ENCODE measurements at regions of chr10 and their contacts with region 1.

Region 1: DNA sequence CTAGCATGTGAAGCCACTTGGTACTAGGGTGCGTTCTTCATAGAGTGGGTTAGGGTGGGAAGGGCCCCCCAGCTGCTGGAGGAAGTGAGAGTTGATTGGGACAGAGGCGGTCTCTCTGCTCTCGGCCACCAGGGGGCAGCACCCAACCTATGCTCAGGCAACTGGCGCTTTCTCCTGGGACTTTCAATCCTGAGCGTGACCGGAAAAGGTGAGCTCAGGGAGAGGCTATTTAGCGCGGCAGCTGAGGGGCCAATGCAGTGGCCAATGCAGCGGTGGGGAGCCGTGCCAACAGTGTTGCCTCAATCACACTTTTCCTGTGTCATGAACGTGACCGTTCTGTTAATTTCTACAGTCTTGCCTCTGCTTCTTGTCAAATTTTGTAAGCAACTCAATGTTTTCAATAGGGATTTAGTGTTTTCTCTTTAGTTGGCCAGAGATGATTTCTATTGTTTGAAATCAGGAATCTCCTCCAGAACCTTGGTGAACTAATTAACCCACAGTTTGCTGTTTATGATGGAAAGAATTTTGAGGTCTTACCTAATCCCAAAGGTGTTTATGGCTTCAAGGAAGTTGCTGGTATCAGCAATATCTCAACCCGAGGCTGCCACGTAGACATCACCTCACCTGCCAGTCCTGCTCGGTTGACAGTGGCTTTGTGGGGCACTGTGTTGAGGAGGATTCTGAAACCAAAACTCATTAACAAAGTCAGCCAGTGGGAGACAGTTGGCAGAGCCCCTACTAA is 67.9 kb upstream of the PDZD8 start:
- DNase-seq: peak; percentile 46 to 93
- H3K4me3 ChIP-seq: no peak overlapping the region
- H3K27ac ChIP-seq: no peak overlapping the region
- H3K4me1 ChIP-seq: no peaks in the 10 kb centered on the region; a peak in 1 of 7 replicates
- H3K27me3 ChIP-seq: no peaks in the 10 kb centered on the region
- CTCF ChIP-seq: peak; percentile 85 to 92 (median 88)
- EP300 ChIP-seq: no peak
- POLR2A ChIP-seq: no peak
- RAD21 ChIP-seq: peak; percentile 69 to 81

Region 2: GRCh38 chr10:117391436-117392205 is 51.5 kb before region 1 on chr10:
- CTCF ChIA-PET with region 1: interaction called, 10 read pairs
- POLR2A ChIA-PET with region 1: no interaction called
- DNase-seq: no peak
- H3K4me3 ChIP-seq: no peak overlapping the region
- H3K27ac ChIP-seq: no peak overlapping the region; the same call in 1 of the 2 replicates
- H3K4me1 ChIP-seq: no peaks in the 10 kb centered on the region
- H3K27me3 ChIP-seq: no peaks in the 10 kb centered on the region
- CTCF ChIP-seq: no peak
- EP300 ChIP-seq: no peak
- POLR2A ChIP-seq: no peak
- RAD21 ChIP-seq: no peak

Region 3: DNA sequence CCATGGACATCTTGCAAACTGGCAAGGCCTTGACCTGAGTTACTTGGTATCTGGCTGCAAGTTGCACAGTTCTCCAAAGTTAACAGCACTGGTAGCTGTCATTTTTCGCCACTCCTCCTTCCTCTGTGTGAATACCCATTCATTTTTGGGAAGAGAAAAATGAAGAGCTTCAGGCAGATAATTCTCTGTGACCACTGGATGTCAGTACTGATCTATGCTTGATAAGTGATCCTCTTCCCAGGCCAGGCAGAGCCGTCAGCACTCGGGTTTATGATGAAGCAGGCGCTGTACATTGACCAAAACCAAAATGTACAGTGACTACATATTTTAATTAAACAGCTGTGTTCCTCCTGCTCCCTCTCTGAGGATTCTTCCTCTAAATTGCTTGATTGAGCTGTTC is 12.0 kb before region 1 on chr10:
- CTCF ChIA-PET with region 1: interaction called, 132 read pairs
- POLR2A ChIA-PET with region 1: no interaction called
- DNase-seq: no peak
- H3K4me3 ChIP-seq: no peak overlapping the region
- H3K27ac ChIP-seq: no peak overlapping the region
- H3K4me1 ChIP-seq: peaks cover 0 to 4% (median under 1%) of the 10 kb centered on the region in 4 experiments; a peak in 3 of 7 replicates
- H3K27me3 ChIP-seq: no peaks in the 10 kb centered on the region
- CTCF ChIP-seq: peak in 1 of 3 experiments; percentile 15; a peak in 1 of 4 replicates
- EP300 ChIP-seq: no peak
- POLR2A ChIP-seq: no peak
- RAD21 ChIP-seq: peak; percentile 26 to 43; a peak in 3 of 4 replicates

Region 4: GRCh38 chr10:117461766-117462423 is 18.8 kb after region 1 on chr10:
- CTCF ChIA-PET with region 1: interaction called, 18 read pairs
- POLR2A ChIA-PET with region 1: no interaction called
- DNase-seq: no peak
- H3K4me3 ChIP-seq: no peak overlapping the region
- H3K27ac ChIP-seq: no peak overlapping the region
- H3K4me1 ChIP-seq: peaks cover 0 to 13% (median 5%) of the 10 kb centered on the region in 4 experiments; a peak in 5 of 7 replicates
- H3K27me3 ChIP-seq: no peaks in the 10 kb centered on the region
- CTCF ChIP-seq: no peak
- EP300 ChIP-seq: no peak
- POLR2A ChIP-seq: no peak
- RAD21 ChIP-seq: no peak

Region 5: GRCh38 chr10:117471344-117471874 is 28.3 kb after region 1 on chr10:
- CTCF ChIA-PET with region 1: interaction called, 11 read pairs
- POLR2A ChIA-PET with region 1: no interaction called
- DNase-seq: no peak
- H3K4me3 ChIP-seq: no peak overlapping the region
- H3K27ac ChIP-seq: no peak overlapping the region
- H3K4me1 ChIP-seq: no peaks in the 10 kb centered on the region
- H3K27me3 ChIP-seq: no peaks in the 10 kb centered on the region
- CTCF ChIP-seq: no peak
- EP300 ChIP-seq: no peak
- POLR2A ChIP-seq: no peak
- RAD21 ChIP-seq: no peak

Region 6: DNA sequence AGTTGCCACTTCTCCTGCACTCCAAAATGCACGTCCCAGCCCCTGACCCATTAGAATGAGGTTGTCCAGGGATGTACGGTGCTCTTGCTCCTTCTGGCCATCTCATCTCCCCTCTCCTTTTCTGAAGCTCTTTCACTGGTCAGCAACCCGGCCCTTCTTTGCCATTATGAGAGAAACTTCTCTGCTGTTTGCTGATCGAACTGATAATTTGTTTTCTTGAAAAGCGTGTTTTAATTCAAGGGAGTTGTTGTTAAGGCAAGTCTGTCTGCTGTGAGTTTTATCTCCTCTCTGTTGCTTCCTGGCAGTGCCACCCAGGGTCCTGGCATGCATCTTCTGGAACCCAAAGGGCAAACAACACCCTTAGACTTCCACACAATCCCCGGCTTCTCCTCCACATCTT is 47.3 kb after region 1 on chr10:
- CTCF ChIA-PET with region 1: interaction called, 13 read pairs
- POLR2A ChIA-PET with region 1: no interaction called
- DNase-seq: no peak
- H3K4me3 ChIP-seq: no peak overlapping the region
- H3K27ac ChIP-seq: no peak overlapping the region
- H3K4me1 ChIP-seq: no peaks in the 10 kb centered on the region
- H3K27me3 ChIP-seq: no peaks in the 10 kb centered on the region; a peak in 2 of 7 replicates
- CTCF ChIP-seq: no peak
- EP300 ChIP-seq: no peak
- POLR2A ChIP-seq: no peak
- RAD21 ChIP-seq: no peak